Gastrocnemius medialis (tissue), 4 donors: ENCODE measurements at regions of chr19 and their contacts with region 1.

Region 1: GRCh38 chr19:20661150-20661819 is at the start of gene ZNF626:
- DNase-seq: peak; percentile 95 to 97
- ATAC-seq: peak; percentile 98 to 100
- H3K4me3 ChIP-seq: peak within 1 kb of the TSS; percentile 73 to 99 (median 82)
- H3K27ac ChIP-seq: peak within 1 kb of the TSS; percentile 84 to 92 (median 86)
- H3K4me1 ChIP-seq: peaks cover 13 to 24% of the 10 kb centered on the region in 2 donors
- H3K27me3 ChIP-seq: no peaks in the 10 kb centered on the region
- CTCF ChIP-seq: no peak
- POLR2A ChIP-seq: peak; percentile 60 to 72
- total RNA-seq, gene ZNF626: 4.9 to 19.4 (median 14.2) TPM

Region 2: GRCh38 chr19:20107301-20107700 is 554.0 kb before region 1 on chr19:
- in situ Hi-C with region 1: no loop called
- intact Hi-C with region 1: no loop called
- DNase-seq: no peak
- ATAC-seq: no peak
- H3K4me3 ChIP-seq: no peak overlapping the region
- H3K27ac ChIP-seq: no peak overlapping the region
- H3K4me1 ChIP-seq: no peaks in the 10 kb centered on the region
- H3K27me3 ChIP-seq: no peaks in the 10 kb centered on the region
- CTCF ChIP-seq: no peak
- POLR2A ChIP-seq: no peak

Region 3: DNA sequence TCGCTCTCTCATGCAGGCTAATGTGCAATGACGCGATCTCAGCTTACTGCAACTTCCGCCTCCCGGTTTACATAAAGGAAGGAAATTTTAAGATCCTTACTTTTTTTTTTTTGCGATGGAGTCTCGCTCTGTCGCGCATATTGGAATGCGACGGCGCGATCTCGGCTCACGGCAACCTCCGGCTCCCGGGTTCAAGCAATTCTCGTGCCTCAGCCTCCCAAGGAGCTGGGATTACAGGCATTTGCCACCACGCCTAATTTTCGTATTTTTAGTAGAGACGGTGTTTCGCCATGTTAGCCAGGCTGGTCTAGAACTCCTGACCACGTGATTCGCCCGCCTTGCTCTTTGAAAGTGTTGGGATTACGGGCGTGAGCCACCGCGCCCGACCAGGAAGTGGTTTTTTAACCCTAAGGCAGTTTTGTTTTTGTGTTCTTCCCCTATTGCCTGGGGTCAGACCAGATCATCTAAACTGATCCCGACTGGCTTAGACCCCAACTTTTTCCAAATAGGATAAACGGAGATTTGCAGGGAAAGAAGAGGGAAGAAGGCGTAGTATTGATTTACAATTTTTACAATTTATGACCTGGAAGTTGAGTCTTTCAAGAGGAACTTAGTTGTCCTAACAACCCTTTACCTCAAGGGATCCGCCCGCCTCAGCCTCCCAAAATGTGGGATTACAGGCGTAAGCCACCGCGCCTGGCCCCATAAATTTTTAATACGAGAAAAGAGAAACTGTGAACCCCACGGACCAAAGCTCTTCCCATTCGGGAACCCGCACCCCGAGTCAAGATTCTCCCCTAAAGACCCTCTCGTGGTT is 237.7 kb before region 1 on chr19:
- in situ Hi-C with region 1: no loop called
- intact Hi-C with region 1: loop called (anchors 10 kb)
- DNase-seq: peak in 1 of 2 donors; percentile 38
- ATAC-seq: peak in 1 of 2 donors; percentile 60
- H3K4me3 ChIP-seq: peak overlapping the region; percentile 42 to 61 (median 58)
- H3K27ac ChIP-seq: peak overlapping the region; percentile 50 to 73 (median 66)
- H3K4me1 ChIP-seq: no peaks in the 10 kb centered on the region
- H3K27me3 ChIP-seq: peaks cover 0 to 6% (median 0%) of the 10 kb centered on the region in 3 donors
- CTCF ChIP-seq: no peak
- POLR2A ChIP-seq: no peak

Region 4: DNA sequence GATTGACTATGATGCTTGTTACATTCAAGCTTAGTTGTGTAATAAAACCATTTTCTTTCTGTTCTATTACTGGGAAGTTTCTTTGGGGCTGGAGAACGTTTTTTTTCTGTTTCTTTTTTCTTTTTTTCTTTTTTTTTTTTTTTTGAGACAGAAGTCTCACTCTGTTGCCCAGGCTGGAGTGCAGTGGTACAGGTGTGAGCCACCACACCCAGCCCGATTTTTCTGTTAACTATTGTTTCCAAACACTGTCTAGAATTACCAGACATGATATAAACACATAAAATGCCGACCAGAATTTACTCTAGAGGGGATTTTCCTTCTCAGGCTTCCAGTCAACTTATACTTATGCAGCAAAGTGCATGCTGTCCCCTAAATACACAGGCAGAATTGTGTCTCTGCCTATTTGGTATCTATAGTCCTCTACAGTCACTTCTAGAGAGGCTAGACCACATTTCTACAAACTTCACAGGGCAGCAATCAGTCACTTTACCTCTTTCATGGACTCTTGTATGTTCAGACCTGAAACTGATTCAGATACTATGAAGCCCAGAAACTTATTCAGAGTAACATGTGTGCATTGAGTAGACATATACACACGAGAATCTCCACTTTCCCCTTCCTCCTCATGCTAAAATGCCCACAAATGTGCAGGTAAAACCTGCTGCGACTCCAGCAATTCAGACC is 216.9 kb before region 1 on chr19:
- in situ Hi-C with region 1: no loop called
- intact Hi-C with region 1: no loop called
- DNase-seq: no peak
- ATAC-seq: no peak
- H3K4me3 ChIP-seq: no peak overlapping the region
- H3K27ac ChIP-seq: no peak overlapping the region
- H3K4me1 ChIP-seq: no peaks in the 10 kb centered on the region
- H3K27me3 ChIP-seq: no peaks in the 10 kb centered on the region
- CTCF ChIP-seq: no peak
- POLR2A ChIP-seq: no peak

Region 5: GRCh38 chr19:20470345-20471134 is 190.7 kb before region 1 on chr19:
- in situ Hi-C with region 1: no loop called
- intact Hi-C with region 1: no loop called
- DNase-seq: no peak
- ATAC-seq: no peak
- H3K4me3 ChIP-seq: no peak overlapping the region
- H3K27ac ChIP-seq: no peak overlapping the region
- H3K4me1 ChIP-seq: no peaks in the 10 kb centered on the region
- H3K27me3 ChIP-seq: no peaks in the 10 kb centered on the region
- CTCF ChIP-seq: no peak
- POLR2A ChIP-seq: no peak

Region 6: GRCh38 chr19:20565321-20566018 is 95.8 kb before region 1 on chr19 and contains the start of gene ZNF737:
- in situ Hi-C with region 1: no loop called
- intact Hi-C with region 1: loop called (anchors 1 kb)
- DNase-seq: peak; percentile 79 to 88
- ATAC-seq: peak; percentile 97 to 98
- H3K4me3 ChIP-seq: peak within 1 kb of the TSS; percentile 60 to 81 (median 80)
- H3K27ac ChIP-seq: peak within 1 kb of the TSS; percentile 73 to 86 (median 79)
- H3K4me1 ChIP-seq: no peaks in the 10 kb centered on the region
- H3K27me3 ChIP-seq: no peaks in the 10 kb centered on the region
- CTCF ChIP-seq: peak in 3 of 5 experiments; percentile 10 to 57 (median 28)
- POLR2A ChIP-seq: peak; percentile 25 to 39
- total RNA-seq, gene ZNF737: 0.95 to 5.4 (median 2.2) TPM

Region 7: GRCh38 chr19:20776083-20777076 is 115.1 kb after region 1 on chr19 and contains the start of gene ZNF66:
- in situ Hi-C with region 1: no loop called
- intact Hi-C with region 1: loop called (anchors 2 kb)
- DNase-seq: peak; percentile 92 to 95
- ATAC-seq: peak; percentile 100
- H3K4me3 ChIP-seq: peak within 1 kb of the TSS; percentile 78 to 98 (median 88)
- H3K27ac ChIP-seq: peak within 1 kb of the TSS; percentile 27 to 66 (median 54)
- H3K4me1 ChIP-seq: peaks cover 0 to 7% of the 10 kb centered on the region in 2 donors
- H3K27me3 ChIP-seq: no peaks in the 10 kb centered on the region
- CTCF ChIP-seq: no peak
- POLR2A ChIP-seq: peak in 1 of 2 donors; percentile 36
- total RNA-seq, gene ZNF66: 0.82 to 2.1 (median 1.6) TPM in 3 of 4 donors, not detected in the other

Region 8: DNA sequence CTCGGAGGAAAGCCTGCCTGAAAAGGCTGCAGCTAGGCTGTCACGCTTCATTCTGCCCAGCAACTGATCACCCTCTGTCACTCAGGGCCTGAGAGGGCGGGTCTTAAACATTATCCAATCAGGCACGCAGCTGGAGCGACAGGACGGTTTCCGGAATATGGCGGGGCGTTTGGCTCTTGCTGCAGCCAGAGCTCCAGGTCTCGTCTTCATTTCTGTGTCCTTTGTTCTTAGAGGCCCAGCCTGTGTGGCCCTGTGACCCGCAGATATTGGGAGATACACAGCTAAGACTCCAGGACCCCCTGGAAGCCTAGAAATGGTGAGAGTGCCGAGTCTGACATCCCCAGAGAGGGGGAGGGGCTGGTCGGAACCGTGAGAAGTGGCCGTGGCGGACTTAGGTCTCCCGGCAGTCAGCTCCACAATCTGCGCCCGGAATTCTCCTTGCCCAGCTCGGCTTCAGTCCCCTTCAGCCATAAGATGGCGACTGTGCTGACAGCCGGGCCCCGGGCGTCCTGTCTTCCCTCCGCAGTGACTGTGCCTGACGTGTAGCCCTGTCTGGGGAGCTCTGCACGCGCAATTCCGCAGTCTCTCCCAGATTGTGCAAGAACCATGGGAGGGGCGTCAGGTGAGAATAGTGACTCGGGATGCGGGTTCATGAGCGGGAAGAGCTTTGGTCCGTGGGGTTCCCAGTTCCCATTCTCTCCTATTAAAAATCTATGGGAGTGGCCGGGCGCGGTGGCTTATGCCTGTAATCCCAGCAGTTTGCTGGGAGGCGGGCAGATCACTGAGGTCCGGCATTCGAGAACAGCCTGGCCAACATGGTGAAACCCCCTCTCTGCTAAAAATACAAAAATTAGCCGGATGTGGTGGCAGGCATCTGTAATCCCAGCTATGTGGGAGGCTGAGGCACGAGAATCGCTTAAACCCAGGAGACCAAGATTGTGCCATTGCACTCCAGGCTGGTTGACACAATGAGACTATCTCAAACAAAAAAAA is 844.5 kb after region 1 on chr19 and contains the start of gene ZNF429:
- in situ Hi-C with region 1: no loop called
- intact Hi-C with region 1: loop called (anchors 10 kb)
- DNase-seq: peak; percentile 90 to 94
- ATAC-seq: peak; percentile 99 to 100
- H3K4me3 ChIP-seq: peak within 1 kb of the TSS; percentile 71 to 87 (median 78)
- H3K27ac ChIP-seq: peak within 1 kb of the TSS; percentile 88 to 94 (median 92)
- H3K4me1 ChIP-seq: peaks cover 14 to 18% of the 10 kb centered on the region in 2 donors
- H3K27me3 ChIP-seq: no peaks in the 10 kb centered on the region
- CTCF ChIP-seq: no peak
- POLR2A ChIP-seq: peak; percentile 78 to 85
- total RNA-seq, gene ZNF429: 3.4 to 11.1 (median 7.4) TPM